GM18951 (cell line): ENCODE measurements at regions of chr9 and their contacts with region 1.

Region 1: GRCh38 chr9:122125158-122125508 is 32.0 kb upstream of the TTLL11 start:
- POLR2A ChIP-seq: no peak

Region 2: GRCh38 chr9:122350638-122351355 is 225.7 kb after region 1 on chr9:
- in situ Hi-C with region 1: loop called (anchors 5 kb)
- POLR2A ChIP-seq: no peak

Region 3: DNA sequence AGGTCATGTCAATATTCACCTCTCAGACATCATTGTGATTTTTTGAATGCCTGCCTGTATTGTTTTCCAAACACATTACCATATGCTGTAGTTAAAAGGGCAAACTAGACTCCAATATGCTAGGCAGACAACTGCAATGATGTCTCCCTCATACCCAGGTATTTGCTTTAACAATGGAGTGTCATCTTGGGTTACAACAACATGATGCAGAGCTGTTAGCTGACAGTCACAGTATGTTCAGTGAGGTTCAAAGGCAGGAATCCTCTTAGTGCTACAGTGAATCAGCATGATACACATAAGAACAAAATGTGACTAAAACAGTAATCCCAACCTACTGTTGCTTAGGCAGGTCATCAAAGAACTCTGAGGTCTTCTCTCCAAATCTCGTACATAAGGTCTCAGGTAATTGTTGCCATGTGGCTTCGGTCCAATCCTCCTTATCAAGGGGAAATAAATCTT is 328.6 kb after region 1 on chr9:
- in situ Hi-C with region 1: loop called (anchors 10 kb)
- POLR2A ChIP-seq: no peak

Region 4: DNA sequence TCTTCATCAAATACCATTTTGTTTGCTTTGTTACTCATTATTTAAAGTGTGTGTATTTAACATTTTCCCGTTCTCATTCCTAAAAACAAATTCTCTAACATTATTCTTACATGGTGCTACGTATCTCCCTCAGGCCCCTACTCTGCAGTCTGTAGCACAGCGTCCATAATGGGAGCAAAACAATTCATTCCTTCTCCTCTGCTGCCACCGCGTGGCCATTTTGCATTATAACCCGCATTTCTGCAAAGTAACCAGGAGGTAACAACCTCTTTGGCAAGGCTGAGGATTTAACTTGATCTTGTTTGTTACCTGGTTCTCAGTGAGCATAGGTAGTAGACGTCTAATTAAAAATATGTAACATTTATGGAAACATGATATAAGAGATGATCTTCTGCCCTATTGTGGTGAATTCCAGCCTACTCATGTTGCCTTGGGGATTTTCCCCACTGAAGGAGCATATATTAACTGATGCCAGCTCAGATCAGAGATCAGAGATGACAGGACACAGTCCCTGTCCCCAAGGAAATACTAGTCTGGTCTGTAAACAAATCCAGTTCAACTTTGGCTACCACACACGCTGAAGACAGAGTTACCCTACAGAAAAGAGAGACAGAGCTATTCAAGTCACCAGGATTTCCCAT is 685.3 kb after region 1 on chr9:
- in situ Hi-C with region 1: loop called (anchors 25 kb)
- POLR2A ChIP-seq: no peak